ENCODE measurements at regions of chr16 and their contacts with region 1.

Region 1: GRCh38 chr16:17026600-17027242 is 444.0 kb downstream of the XYLT1 start:
- DNase-seq: peak; percentile 67
- H3K4me3 Mint-ChIP-seq: no peak overlapping the region
- H3K27ac Mint-ChIP-seq: peak overlapping the region; percentile 47
- H3K4me1 Mint-ChIP-seq: peaks cover 30% of the 10 kb centered on the region
- H3K27me3 Mint-ChIP-seq: no peaks in the 10 kb centered on the region

Region 2: DNA sequence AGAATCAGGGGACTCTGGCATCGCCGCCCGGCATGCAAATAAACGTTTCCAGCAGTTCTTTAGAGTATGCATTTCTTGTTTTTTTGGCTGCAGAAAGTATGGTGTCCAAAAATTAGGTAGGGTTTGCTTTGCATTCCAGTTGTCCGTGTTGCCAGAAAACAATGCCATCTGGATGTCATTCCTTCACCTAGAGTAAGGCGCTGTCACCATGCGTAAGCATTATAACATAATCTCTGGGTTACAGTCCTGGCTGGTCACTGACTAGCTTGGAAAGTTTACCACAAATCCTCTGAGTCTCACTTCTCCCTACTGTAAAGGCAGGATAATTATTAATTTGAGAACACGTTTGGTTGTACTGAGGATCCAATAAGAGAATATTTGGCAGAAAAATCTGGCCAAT is 13.7 kb before region 1 on chr16:
- CTCF ChIA-PET with region 1: interaction called, 3 read pairs
- intact Hi-C with region 1: loop called (anchors 1 kb)
- DNase-seq: no peak
- H3K4me3 Mint-ChIP-seq: peak overlapping the region; percentile 76
- H3K27ac Mint-ChIP-seq: no peak overlapping the region
- H3K4me1 Mint-ChIP-seq: peaks cover 15% of the 10 kb centered on the region
- H3K27me3 Mint-ChIP-seq: no peaks in the 10 kb centered on the region

Region 3: DNA sequence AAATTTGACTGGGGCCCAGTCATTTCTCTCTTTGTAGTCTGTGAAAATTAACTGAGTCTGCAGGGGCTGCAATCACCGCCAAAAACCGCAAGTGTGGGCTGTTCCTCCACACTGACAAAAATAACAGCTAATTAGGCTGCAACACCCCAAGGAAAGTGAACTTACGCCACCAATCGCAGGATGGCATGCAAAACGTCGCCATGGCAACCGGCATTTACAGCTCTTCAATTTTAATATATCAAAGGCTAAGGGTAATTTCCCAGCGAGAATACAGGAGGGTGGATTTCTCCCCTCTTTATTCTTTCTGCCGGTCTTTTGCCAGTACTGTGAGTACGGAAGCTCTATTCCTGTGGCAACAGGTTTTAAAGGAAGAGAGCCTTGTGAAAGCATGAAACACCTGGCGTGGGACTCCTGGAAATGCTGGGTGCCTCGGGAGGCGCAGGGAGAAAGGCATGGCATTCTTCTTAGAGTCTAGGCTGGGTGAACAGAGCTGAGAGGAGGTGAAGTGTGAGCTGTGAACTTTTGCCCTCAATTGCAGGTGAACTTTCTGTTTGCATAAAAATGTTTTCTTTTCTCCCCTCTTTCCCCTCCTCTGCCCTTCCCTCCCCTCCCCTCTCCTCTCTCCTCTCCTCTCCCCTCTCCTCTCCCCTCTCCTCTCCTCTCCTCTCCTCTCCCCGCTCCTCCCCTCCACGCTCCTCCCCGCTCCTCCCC is 44.3 kb after region 1 on chr16:
- CTCF ChIA-PET with region 1: no interaction called
- intact Hi-C with region 1: loop called (anchors 2 kb)
- DNase-seq: peak; percentile 87
- H3K4me3 Mint-ChIP-seq: peak overlapping the region; percentile 28
- H3K27ac Mint-ChIP-seq: peak overlapping the region; percentile 68
- H3K4me1 Mint-ChIP-seq: peaks cover 20% of the 10 kb centered on the region
- H3K27me3 Mint-ChIP-seq: no peaks in the 10 kb centered on the region